Adrenal gland (tissue), 19 donors: ENCODE measurements at regions of chr9 and their contacts with region 1.

Region 1: DNA sequence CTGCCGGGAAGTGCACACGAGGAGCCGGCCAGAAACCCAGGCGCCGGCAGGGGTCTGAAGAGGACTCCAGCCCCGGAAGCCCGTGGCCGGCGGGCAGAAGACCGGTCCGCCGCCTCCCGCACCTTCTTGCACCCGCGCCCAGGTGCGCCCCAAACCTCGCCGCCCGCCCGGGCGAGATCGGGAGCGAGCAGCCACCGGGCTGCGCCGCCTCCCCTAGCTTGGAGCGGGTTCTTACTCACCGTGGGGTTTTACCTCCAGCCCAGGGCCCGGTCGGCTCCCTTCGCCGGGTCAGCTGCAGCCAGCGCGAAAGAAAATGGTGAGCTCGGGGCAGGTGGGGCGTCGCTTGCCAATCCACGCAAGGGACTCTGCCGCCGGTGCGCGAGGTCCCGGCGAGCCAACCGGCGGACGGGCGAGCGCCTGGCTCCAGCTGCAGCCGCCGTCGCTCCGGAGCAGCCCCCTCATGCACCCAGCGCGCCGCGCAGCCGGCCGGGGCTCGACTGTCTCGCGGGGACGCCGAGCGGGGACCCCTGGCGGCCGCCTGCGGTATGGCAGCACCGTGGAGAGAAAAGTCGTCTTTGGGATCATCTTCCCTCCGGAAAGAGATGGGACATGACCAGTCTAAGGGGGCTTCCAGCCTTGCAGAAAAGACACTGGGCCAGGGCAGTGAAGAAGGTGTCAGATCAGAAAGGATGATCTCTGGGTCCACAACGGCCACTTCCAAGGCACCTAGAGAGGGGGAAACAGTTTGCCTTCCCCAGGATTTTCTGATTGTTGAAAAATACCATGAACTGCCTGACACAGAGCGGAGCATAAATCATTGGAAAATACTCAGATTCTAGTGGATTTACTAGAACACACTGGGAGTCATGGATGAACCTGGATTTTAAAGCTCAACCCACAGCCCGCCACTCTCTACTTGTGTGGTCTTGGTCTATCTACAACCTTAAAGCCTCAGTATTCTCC is at the start of gene MOB3B:
- DNase-seq: peak; percentile 74 to 90 (median 86)
- H3K4me3 ChIP-seq: peak within 1 kb of the TSS; percentile 45 to 90 (median 64)
- H3K27ac ChIP-seq: peak within 1 kb of the TSS in 4 of 5 donors; percentile 11 to 86 (median 74)
- H3K4me1 ChIP-seq: peaks cover 0 to 11% of the 10 kb centered on the region in 2 donors
- H3K27me3 ChIP-seq: no peaks in the 10 kb centered on the region
- CTCF ChIP-seq: peak; percentile 57 to 98 (median 85)
- POLR2A ChIP-seq: no peak
- total RNA-seq, gene MOB3B: 1.4 to 7.0 (median 3.7) TPM

Region 2: DNA sequence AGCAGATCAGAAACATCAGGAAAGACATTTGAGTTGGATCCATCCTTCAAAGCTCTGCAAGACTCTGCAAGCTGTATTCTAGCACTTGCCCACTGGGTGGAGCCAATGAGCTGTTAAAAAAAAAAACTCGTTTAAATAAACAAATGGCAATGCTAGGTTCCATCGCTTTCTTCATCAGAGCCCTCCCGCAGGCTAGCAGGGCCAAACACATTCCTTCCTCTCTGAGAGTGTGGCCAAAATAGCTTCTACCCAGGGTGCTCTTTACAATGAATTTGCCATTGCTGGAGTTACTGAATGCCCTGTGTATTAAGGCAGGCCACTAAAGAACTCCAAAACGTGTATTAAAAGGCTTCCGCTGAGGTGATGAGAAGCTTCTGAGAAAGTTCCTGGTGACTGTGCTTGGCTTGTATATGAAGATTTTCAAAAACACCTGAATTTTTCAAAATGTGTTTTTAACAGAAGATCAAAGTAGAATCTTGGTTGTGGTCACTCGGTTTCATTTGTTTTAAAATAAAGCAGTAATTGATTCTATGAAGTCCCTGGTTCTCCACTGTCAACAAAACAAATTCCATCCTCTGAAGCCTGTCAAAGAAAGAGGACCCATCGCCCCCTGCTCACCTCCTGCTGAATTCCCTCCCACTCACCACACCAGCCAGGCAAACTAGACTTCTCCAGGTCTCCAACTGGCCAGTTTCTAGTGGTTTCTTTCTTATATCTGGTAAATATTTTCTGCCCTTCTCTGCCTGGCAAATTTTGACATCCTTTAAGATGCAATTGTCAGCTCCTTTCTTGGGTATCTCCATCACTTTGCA is 196.2 kb before region 1 on chr9:
- intact Hi-C with region 1: loop called (anchors 5 kb)
- DNase-seq: peak; percentile 47 to 84 (median 69)
- H3K4me3 ChIP-seq: no peak overlapping the region
- H3K27ac ChIP-seq: no peak overlapping the region
- H3K4me1 ChIP-seq: peaks cover 0 to 15% of the 10 kb centered on the region in 2 donors
- H3K27me3 ChIP-seq: no peaks in the 10 kb centered on the region
- CTCF ChIP-seq: peak; percentile 69 to 92 (median 88)
- POLR2A ChIP-seq: no peak

Region 3: GRCh38 chr9:27340961-27341511 is 188.6 kb before region 1 on chr9:
- intact Hi-C with region 1: loop called in 1 of 2 experiments (anchors 5 kb)
- DNase-seq: no peak
- H3K4me3 ChIP-seq: no peak overlapping the region
- H3K27ac ChIP-seq: peak overlapping the region in 2 of 5 donors; percentile 26 to 36
- H3K4me1 ChIP-seq: peaks cover 0 to 46% of the 10 kb centered on the region in 2 donors
- H3K27me3 ChIP-seq: no peaks in the 10 kb centered on the region
- CTCF ChIP-seq: no peak
- POLR2A ChIP-seq: no peak

Region 4: DNA sequence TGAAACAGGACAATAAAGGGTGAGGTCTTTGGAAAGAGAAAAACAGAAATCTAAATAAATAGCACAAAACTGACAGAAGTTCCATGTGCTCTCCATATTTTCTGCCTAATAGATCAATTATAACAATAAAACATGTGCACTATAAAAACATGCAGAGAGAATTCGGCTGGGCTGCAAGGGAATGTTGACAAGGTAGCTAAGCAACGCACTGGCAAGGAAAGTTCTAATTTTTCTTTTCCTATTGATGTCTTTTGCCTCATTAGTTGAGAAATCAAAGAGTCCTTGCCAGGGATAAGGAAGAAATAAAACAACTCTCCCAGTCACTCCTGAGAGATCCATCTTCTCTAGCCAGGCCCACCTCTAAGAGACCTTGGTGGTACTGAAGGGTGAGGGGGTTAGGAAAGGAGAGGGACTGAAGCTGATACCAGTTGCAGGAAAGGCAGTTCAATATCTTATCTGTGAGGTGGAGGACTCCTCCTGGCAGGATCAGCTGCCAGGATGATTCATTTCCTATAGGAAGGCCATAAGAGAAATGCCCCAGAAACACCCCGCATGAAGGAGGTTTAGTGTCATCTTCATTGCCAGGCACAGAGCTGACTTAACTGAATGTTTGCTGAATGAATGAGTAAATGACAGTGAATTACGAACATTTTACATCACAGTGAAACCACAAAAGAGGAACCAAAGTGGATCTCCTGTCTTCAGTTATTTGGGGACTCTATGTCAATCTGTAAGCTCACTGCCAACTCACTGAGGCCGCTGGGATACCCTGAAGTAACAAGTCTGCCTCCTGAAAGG is 69.2 kb before region 1 on chr9:
- intact Hi-C with region 1: loop called in 1 of 2 experiments (anchors 5 kb)
- DNase-seq: peak in 3 of 7 donors; percentile 31 to 50 (median 35)
- H3K4me3 ChIP-seq: no peak overlapping the region
- H3K27ac ChIP-seq: peak overlapping the region in 1 of 5 donors; percentile 38
- H3K4me1 ChIP-seq: peaks cover 6 to 20% of the 10 kb centered on the region in 2 donors
- H3K27me3 ChIP-seq: no peaks in the 10 kb centered on the region
- CTCF ChIP-seq: no peak
- POLR2A ChIP-seq: no peak

Region 5: GRCh38 chr9:27573634-27574590 is 44.3 kb after region 1 on chr9:
- intact Hi-C with region 1: no loop called
- DNase-seq: peak; percentile 95 to 100 (median 99)
- H3K4me3 ChIP-seq: peak overlapping the region in 3 of 4 donors; percentile 36 to 89 (median 77)
- H3K27ac ChIP-seq: peak overlapping the region; percentile 79 to 99 (median 94)
- H3K4me1 ChIP-seq: peaks cover 0 to 10% of the 10 kb centered on the region in 2 donors
- H3K27me3 ChIP-seq: no peaks in the 10 kb centered on the region
- CTCF ChIP-seq: no peak
- POLR2A ChIP-seq: peak; percentile 78 to 90

Region 6: DNA sequence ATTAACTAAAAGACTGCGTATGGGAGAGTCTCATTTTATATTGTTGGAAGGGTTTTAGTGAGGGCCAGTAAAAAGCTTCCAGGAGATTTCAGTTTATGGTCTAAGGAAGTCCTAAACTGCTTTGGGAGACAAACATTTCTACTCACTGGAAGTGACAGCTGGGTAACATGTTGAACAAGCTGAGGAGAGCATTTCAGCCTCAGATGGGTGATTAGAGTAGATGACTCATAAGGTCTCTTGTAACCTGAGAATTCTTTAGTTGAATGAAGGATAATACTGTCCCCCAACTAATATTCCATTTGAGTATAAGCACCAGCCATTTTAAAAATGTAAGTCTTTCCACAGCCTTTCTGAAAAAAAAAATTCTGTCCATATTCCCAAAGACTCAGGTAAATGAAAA is 261.7 kb after region 1 on chr9:
- intact Hi-C with region 1: no loop called
- DNase-seq: no peak
- H3K4me3 ChIP-seq: no peak overlapping the region
- H3K27ac ChIP-seq: no peak overlapping the region
- H3K4me1 ChIP-seq: no peaks in the 10 kb centered on the region
- H3K27me3 ChIP-seq: no peaks in the 10 kb centered on the region
- CTCF ChIP-seq: no peak
- POLR2A ChIP-seq: no peak